ENCODE measurements at regions of chr10 and their contacts with region 1.

Region 1: GRCh38 chr10:112383325-112383724 is 9.4 kb downstream of the ACSL5 start:
- DNase-seq: peak; percentile 72
- ATAC-seq: peak; percentile 56
- H3K4me3 ChIP-seq: no peak overlapping the region
- H3K27ac ChIP-seq: peak overlapping the region; percentile 65
- H3K4me1 ChIP-seq: peaks cover 100% of the 10 kb centered on the region
- H3K27me3 ChIP-seq: no peaks in the 10 kb centered on the region
- CTCF ChIP-seq: no peak
- EP300 ChIP-seq: peak in 1 of 2 experiments; percentile 72; a peak in 2 of 4 replicates
- POLR2A ChIP-seq: no peak
- RAD21 ChIP-seq: no peak

Region 2: DNA sequence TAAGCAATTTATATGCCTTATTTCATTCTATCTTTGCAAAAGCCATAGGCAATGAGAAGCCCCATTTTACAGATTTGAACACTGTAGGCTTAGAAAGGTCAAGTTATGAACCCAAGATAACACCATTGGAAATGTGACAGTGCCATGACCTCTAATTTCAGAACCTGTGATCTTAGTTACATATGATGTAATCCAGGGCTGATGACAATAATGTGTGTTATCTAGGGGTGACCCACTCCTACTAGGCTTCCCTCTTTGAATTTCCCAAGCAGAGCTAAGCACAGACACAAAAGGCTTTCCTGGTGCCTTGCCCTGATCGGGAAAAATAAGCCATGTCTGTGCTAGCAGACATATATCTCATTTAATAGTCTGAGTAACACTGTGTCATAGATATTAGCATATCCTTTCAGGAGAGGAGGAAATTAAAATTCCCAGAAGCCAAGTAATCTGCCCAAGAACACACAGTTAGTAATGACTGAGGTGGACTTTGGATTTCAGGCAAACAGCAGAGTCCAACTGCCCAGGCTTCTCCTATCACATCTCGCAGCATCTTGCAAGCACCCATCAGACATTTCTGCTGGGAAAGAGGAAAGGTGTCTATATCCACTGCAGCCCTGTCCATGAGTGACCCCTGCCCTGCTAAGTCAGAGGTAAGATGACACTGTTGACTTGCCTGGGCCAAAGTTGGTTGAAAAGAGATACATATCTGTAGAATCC is 103.0 kb before region 1 on chr10:
- CTCF ChIA-PET with region 1: no interaction called
- POLR2A ChIA-PET with region 1: no interaction called
- in situ Hi-C with region 1: no loop called
- intact Hi-C with region 1: no loop called
- DNase-seq: peak; percentile 71
- ATAC-seq: peak; percentile 75
- H3K4me3 ChIP-seq: no peak overlapping the region; a peak in 1 of 6 replicates
- H3K27ac ChIP-seq: peak overlapping the region; percentile 60
- H3K4me1 ChIP-seq: peaks cover 73% of the 10 kb centered on the region
- H3K27me3 ChIP-seq: no peaks in the 10 kb centered on the region
- CTCF ChIP-seq: 0 out of 2 replicates have a peak, but pooled peaks have one; percentile 3
- EP300 ChIP-seq: peak in 1 of 2 experiments; percentile 28; a peak in 2 of 4 replicates
- POLR2A ChIP-seq: no peak
- RAD21 ChIP-seq: no peak

Region 3: GRCh38 chr10:112361951-112362751 is 21.2 kb before region 1 on chr10:
- CTCF ChIA-PET with region 1: no interaction called
- POLR2A ChIA-PET with region 1: interaction called, 26 read pairs
- in situ Hi-C with region 1: no loop called
- intact Hi-C with region 1: no loop called
- DNase-seq: no peak
- ATAC-seq: no peak
- H3K4me3 ChIP-seq: no peak overlapping the region
- H3K27ac ChIP-seq: no peak overlapping the region
- H3K4me1 ChIP-seq: peaks cover 78% of the 10 kb centered on the region
- H3K27me3 ChIP-seq: no peaks in the 10 kb centered on the region
- CTCF ChIP-seq: no peak
- EP300 ChIP-seq: no peak
- POLR2A ChIP-seq: no peak
- RAD21 ChIP-seq: no peak

Measured in HepG2 (cell line).